Activated B cell treated with CpG ODN at 0.5 μM for 24 hours (primary cell): ENCODE measurements at regions of chr17 and their contacts with region 1.

Region 1: DNA sequence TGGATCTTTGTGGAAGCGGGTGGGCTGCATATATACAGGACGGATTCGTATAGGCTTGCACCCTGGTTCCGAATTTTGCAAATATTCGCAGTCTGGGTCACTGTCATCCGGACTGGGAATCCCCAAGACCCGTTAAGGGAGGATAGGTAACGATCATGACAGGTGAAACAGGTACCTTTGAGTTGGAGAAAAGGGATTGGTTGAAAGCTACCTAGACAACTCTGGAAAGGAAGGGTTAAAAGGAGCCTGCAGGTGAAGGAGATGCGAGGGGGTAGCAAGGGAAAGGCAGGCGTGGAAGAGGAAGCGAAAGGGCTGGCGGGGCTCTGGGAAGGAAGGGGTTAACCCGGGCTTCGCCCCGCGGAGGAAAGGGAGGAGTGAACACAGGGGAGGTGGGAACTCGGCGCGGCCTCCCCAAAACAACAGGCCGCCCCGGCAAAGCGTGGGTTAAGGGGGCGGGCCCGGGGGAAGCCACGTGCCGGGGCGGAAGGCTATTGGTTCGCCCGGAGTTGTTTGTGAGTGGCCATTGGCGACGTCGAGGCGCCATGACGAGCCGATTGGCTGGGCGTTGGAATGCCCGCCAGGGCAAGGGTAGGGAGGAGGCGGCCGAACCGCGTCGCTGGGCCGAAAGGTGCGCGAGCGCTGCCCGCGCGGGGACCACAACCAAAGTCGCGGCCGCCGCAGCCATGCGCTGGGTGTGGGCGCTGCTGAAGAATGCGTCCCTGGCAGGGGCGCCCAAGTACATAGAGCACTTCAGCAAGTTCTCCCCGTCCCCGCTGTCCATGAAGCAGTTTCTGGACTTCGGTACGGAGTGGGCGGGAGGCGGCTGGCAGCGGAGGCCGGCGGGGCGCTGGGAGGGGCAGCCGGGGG is at the start of gene PDK2:
- DNase-seq: peak; percentile 93
- ATAC-seq: peak; percentile 91
- H3K4me3 Mint-ChIP-seq: peak within 1 kb of the TSS; percentile 96
- H3K27ac Mint-ChIP-seq: peak within 1 kb of the TSS; percentile 94
- H3K4me1 Mint-ChIP-seq: peaks cover 26% of the 10 kb centered on the region
- H3K27me3 Mint-ChIP-seq: no peaks in the 10 kb centered on the region
- CTCF ChIP-seq: no peak
- total RNA-seq, gene PDK2: 15.9 and 16.2 TPM in 2 replicates

Region 2: DNA sequence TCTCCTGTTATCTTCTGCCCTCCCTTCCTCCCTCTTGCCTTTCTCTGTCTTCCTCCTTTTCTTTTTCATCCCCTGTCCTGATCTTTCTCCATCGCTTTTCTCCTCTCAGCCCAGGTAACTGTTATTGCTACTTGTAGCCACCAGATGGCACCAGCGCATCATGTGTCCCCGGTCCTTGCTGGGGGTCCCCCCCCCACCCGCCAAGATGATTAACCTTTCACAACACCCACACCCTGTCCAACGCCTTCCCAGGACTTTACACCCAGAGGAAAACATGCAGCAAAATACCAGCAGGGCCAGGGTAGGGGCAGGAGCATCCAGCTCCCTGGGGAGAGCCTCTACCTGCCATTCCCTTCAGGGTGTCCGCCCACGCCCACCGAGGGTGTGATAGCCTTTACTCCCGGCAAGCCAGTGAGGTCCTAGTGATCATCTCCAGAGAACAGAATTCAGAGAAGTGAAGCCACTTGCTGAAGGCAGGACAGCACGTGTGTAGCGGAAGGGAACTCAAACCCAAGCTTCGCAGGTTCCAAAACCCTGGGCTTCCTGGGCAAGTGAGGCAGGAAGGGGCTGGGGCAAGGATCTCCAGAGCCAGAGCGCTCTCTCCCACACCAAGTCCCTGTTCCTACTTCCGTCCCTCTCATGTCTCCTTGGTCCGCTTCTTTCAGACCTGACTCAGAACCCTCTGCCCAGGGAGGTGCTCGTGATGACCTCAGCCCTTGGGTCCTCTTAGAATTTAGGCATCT is 233.7 kb before region 1 on chr17:
- CTCF ChIA-PET with region 1: interaction called, 3 read pairs
- POLR2A ChIA-PET with region 1: no interaction called
- intact Hi-C with region 1: loop called (anchors 2 kb)
- DNase-seq: peak; percentile 40
- ATAC-seq: peak; percentile 78
- H3K4me3 Mint-ChIP-seq: no peak overlapping the region
- H3K27ac Mint-ChIP-seq: no peak overlapping the region
- H3K4me1 Mint-ChIP-seq: no peaks in the 10 kb centered on the region
- H3K27me3 Mint-ChIP-seq: peaks cover 30% of the 10 kb centered on the region
- CTCF ChIP-seq: peak; percentile 17

Region 3: GRCh38 chr17:50055426-50056230 is 39.4 kb before region 1 on chr17 and contains the start of gene ITGA3:
- CTCF ChIA-PET with region 1: interaction called, 9 read pairs
- POLR2A ChIA-PET with region 1: interaction called, 5 read pairs
- intact Hi-C with region 1: loop called (anchors 2 kb)
- DNase-seq: peak; percentile 38
- ATAC-seq: peak; percentile 64
- H3K4me3 Mint-ChIP-seq: peak within 1 kb of the TSS; percentile 91
- H3K27ac Mint-ChIP-seq: peak within 1 kb of the TSS; percentile 59
- H3K4me1 Mint-ChIP-seq: peaks cover 29% of the 10 kb centered on the region
- H3K27me3 Mint-ChIP-seq: peaks cover 21% of the 10 kb centered on the region
- CTCF ChIP-seq: no peak
- total RNA-seq, gene ITGA3: 7.7 and 9.8 TPM in 2 replicates

Region 4: DNA sequence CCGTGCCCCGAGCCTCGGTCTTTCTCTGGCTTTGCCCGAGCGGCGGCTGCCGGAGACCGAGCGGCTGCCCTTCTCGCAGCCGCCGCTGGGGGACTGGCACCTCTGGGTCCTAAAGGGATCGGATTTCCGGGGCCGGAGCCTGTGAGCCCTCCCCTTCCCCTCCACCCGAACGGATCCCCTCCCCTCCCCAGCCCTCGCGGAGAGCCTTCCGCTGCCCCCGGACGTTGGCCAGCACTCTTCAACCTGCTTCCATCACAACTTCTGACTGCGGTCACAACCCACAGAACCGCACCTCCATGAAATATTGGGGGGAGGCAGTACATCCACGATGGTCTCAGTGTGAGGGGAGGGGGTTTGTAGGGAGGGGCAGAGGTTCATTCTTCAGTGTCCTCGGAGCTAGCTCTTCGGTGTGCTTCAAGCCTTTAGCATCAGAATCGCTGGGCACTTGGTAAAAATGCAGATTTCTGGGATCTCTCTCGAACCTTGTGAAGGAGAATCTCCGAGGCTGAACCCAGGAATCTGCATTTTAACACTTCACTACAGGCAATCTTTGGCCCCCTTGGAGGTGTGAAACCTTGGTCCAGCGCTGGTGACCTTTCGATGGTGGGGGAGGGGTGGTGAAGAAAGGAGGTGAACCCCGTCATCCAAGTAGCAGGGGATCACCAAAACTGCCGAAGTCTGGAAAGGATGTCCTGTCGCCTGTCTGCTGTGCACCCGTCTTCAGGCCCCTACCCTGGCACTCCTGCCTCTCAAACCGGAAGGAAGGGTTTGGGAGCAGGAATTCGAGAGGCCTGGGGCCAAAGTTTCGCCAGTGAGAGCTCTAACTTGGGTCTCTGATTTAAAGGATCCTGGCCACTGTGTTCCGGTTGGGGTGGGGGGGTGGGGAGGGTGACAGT is 56.3 kb after region 1 on chr17:
- CTCF ChIA-PET with region 1: interaction called, 9 read pairs
- POLR2A ChIA-PET with region 1: interaction called, 18 read pairs
- intact Hi-C with region 1: loop called (anchors 1 kb)
- DNase-seq: peak; percentile 80
- ATAC-seq: peak; percentile 40
- H3K4me3 Mint-ChIP-seq: peak overlapping the region; percentile 93
- H3K27ac Mint-ChIP-seq: peak overlapping the region; percentile 91
- H3K4me1 Mint-ChIP-seq: peaks cover 34% of the 10 kb centered on the region
- H3K27me3 Mint-ChIP-seq: no peaks in the 10 kb centered on the region
- CTCF ChIP-seq: no peak

Region 5: DNA sequence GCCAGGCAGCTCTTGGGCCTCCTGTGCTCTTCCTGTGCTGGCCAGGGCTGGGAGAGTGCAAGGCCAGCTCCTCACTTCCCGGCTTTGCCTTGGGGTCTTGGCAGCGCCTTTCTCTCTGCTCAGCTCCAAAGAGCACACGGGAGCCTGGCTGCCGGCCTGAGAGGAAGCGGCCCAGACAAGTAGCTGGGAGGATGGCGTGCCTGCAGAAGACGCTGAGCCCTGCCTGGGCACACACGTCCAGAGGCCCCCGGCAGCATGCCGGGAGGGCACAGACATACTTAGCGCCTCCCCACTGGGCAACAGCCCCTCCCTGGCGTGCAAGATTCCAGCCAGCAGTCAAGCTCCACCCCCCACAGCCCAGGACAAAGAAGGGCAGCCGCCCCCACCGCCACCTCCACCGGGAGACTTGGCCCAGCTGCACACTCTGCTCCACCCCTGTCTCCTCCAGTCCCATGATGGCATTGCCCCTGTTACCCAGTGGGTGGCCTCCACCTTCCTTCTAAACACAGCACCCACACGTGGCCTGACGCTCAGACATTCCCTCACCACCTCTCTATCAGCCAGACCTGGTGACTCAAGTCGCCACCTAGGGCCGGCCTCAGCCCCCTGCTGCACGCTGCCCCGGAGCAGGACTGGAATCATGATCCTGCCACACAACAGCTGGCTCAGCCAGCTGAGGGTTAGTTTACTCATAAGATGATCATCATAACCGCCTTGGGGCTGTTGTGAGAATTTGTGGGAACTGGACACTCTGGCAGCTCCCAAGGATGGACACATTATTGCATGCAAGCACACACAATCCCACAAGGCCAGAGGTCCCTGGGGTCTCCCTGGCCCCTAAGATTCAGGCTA is 83.2 kb after region 1 on chr17:
- CTCF ChIA-PET with region 1: interaction called, 16 read pairs
- POLR2A ChIA-PET with region 1: no interaction called
- intact Hi-C with region 1: loop called (anchors 1 kb)
- DNase-seq: peak; percentile 45
- ATAC-seq: peak; percentile 99
- H3K4me3 Mint-ChIP-seq: peak overlapping the region; percentile 54
- H3K27ac Mint-ChIP-seq: no peak overlapping the region
- H3K4me1 Mint-ChIP-seq: peaks cover 18% of the 10 kb centered on the region
- H3K27me3 Mint-ChIP-seq: no peaks in the 10 kb centered on the region
- CTCF ChIP-seq: no peak

Region 6: GRCh38 chr17:50269477-50270434 is 174.8 kb after region 1 on chr17:
- CTCF ChIA-PET with region 1: interaction called, 6 read pairs
- POLR2A ChIA-PET with region 1: no interaction called
- intact Hi-C with region 1: loop called (anchors 1 kb)
- DNase-seq: peak; percentile 31
- ATAC-seq: peak; percentile 76
- H3K4me3 Mint-ChIP-seq: no peak overlapping the region
- H3K27ac Mint-ChIP-seq: no peak overlapping the region
- H3K4me1 Mint-ChIP-seq: peaks cover 6% of the 10 kb centered on the region
- H3K27me3 Mint-ChIP-seq: peaks cover 26% of the 10 kb centered on the region
- CTCF ChIP-seq: no peak

Region 7: DNA sequence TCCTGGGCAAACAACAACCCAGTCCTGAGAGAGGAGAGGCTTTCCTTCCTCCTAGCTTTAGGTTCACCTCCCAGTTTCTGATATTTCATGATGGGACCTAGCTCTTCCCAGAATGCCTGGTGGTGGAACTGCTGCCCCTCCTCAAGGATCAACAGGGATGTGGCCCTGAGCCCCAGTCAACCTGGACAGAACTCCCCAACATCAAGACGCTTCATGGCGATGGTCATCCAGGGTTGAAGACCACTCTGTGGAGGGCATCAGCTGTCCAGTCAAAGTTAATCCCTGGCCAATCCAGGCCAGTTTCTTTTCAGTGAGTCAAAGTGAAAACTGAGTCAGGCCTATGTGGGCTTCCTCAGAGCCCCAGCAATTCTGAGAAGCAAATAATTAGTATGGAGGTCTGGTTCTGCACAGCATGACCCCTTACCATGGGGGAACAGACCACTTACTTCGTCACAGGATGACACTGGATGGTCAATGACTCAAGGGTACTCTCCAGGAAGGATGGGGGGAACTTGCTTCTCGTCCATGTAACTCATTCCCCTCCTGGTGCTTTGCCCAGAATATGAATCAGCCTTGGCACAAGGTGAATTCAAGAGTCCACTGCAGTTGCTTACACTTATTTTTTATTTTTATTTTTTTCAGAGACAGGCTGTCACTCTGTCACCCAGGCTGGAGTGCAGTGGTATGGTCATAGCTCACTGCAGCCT is 236.3 kb after region 1 on chr17:
- CTCF ChIA-PET with region 1: no interaction called
- POLR2A ChIA-PET with region 1: no interaction called
- intact Hi-C with region 1: no loop called
- DNase-seq: no peak
- ATAC-seq: no peak
- H3K4me3 Mint-ChIP-seq: no peak overlapping the region
- H3K27ac Mint-ChIP-seq: no peak overlapping the region
- H3K4me1 Mint-ChIP-seq: peaks cover 1% of the 10 kb centered on the region
- H3K27me3 Mint-ChIP-seq: peaks cover 14% of the 10 kb centered on the region
- CTCF ChIP-seq: no peak

Region 8: DNA sequence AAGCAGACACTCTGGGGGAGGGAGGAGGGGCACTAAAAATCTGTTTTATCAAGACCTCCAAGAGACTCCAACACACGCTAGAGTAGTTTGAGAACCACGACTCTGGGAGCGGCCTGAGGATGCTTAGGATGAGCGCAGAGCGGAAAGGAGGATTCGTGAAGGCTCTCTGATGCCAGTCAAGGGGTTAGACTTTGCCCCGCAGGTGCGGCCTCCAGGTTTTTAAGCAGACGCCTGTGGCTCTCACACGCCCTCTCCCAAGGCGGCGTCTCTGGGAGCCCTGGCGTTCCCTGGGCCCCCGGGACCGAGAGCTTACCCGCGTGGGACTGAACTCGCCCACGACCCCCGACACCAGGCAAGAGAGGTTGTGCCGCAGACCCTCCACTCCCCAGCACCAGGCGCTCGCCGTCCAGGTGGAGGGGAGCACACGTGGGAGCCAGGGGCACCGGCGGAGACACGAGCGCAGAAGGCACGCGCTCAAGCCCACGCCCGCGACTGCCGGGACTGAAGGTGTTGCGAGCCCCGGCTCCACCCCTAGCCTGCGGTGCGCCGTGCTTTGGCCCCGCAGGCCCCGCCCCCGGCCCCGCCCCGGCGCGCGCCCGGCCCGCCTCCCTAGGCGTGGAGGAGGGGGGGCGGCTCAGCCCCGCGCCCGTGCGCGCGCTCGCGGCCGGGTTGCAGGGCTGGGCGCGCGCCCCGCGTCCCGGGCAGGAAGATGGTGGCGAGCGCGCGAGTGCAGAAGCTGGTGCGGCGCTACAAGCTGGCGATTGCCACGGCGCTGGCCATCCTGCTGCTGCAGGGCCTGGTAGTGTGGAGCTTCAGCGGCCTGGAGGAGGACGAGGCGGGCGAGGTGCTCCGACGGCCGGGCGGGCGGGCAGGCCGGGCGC is 250.7 kb after region 1 on chr17 and contains the start of gene XYLT2:
- CTCF ChIA-PET with region 1: interaction called, 3 read pairs
- POLR2A ChIA-PET with region 1: no interaction called
- intact Hi-C with region 1: loop called (anchors 1 kb)
- DNase-seq: peak; percentile 97
- ATAC-seq: peak; percentile 94
- H3K4me3 Mint-ChIP-seq: peak within 1 kb of the TSS; percentile 90
- H3K27ac Mint-ChIP-seq: peak within 1 kb of the TSS; percentile 89
- H3K4me1 Mint-ChIP-seq: peaks cover 24% of the 10 kb centered on the region
- H3K27me3 Mint-ChIP-seq: no peaks in the 10 kb centered on the region
- CTCF ChIP-seq: no peak
- total RNA-seq, gene XYLT2: 20.3 and 21.4 TPM in 2 replicates

Region 9: DNA sequence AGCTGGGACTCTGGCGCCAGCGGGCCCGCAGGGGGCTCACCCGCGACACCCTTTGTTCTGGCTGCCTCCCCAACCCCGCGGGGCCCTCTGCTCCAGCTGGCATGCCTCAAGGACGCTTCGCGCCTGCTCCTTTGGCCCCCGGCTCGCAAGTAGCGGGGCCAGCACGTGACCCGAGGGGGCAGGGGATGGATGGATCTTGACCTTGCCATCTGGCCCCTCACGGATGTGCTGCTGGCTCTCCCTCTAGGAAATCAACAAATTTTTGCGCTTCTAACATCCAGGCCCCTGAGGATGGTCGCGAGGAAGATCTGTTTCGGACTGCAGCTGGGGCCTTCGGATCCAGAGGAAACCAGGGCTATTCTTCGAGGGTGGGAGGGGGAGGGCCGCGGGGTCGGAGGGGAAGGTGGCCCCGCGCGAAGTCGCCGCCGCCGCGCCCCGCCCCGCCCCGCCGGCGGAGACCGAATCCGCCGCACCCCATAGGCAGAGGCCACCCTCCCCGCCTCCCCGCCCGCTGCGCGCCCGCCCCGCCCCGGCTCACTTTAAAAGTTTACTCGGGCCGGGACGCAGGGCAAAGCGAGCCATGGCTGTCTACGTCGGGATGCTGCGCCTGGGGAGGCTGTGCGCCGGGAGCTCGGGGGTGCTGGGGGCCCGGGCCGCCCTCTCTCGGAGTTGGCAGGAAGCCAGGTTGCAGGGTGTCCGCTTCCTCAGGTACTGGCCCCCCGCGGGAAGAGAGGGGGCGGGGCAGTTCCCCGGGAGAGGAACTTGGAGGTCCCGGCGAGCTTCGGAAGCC is 330.9 kb after region 1 on chr17 and contains the start of gene ACSF2:
- CTCF ChIA-PET with region 1: no interaction called
- POLR2A ChIA-PET with region 1: no interaction called
- intact Hi-C with region 1: no loop called
- DNase-seq: peak; percentile 65
- ATAC-seq: peak; percentile 82
- H3K4me3 Mint-ChIP-seq: peak within 1 kb of the TSS; percentile 88
- H3K27ac Mint-ChIP-seq: peak within 1 kb of the TSS; percentile 83
- H3K4me1 Mint-ChIP-seq: peaks cover 44% of the 10 kb centered on the region
- H3K27me3 Mint-ChIP-seq: no peaks in the 10 kb centered on the region
- CTCF ChIP-seq: no peak
- total RNA-seq, gene ACSF2: 16.4 and 17.9 TPM in 2 replicates

Region 10: DNA sequence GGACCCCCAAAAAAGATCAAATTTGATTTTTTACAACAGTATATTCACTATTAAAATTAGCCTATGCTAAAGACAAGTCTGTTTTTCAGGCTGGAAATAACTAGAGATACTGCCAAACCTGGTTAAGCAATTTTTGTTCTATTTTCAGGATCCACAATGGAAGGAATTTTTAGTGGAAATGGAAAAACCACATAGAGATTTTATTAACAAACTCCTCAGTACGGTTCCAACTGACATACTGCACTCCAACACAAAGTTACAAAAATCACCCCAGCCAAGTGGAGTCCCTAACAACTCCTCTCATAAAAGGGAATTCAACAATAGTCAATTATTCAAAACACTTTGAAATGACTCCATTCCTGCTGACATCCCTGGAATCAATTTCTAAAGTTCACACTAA is 872.8 kb after region 1 on chr17:
- CTCF ChIA-PET with region 1: no interaction called
- POLR2A ChIA-PET with region 1: no interaction called
- intact Hi-C with region 1: no loop called
- DNase-seq: no peak
- ATAC-seq: no peak
- H3K4me3 Mint-ChIP-seq: no peak overlapping the region
- H3K27ac Mint-ChIP-seq: no peak overlapping the region
- H3K4me1 Mint-ChIP-seq: no peaks in the 10 kb centered on the region
- H3K27me3 Mint-ChIP-seq: no peaks in the 10 kb centered on the region
- CTCF ChIP-seq: no peak